ENCODE measurements at regions of chr14 and their contacts with region 1.

Region 1: GRCh38 chr14:68816262-68816942 is 23.5 kb upstream of the ZFP36L1 start:
- DNase-seq: peak; percentile 83 to 92 (median 86)
- H3K4me3 ChIP-seq: peak overlapping the region; percentile 79
- H3K4me3 Mint-ChIP-seq: peak overlapping the region; percentile 76 to 94 (median 82)
- H3K27ac ChIP-seq: peak overlapping the region; percentile 86
- H3K27ac Mint-ChIP-seq: peak overlapping the region; percentile 90 to 100 (median 96)
- H3K4me1 ChIP-seq: peaks cover 73% of the 10 kb centered on the region
- H3K4me1 Mint-ChIP-seq: peaks cover 68 to 76% (median 73%) of the 10 kb centered on the region in 3 donors
- H3K27me3 ChIP-seq: no peaks in the 10 kb centered on the region
- H3K27me3 Mint-ChIP-seq: no peaks in the 10 kb centered on the region

Region 2: DNA sequence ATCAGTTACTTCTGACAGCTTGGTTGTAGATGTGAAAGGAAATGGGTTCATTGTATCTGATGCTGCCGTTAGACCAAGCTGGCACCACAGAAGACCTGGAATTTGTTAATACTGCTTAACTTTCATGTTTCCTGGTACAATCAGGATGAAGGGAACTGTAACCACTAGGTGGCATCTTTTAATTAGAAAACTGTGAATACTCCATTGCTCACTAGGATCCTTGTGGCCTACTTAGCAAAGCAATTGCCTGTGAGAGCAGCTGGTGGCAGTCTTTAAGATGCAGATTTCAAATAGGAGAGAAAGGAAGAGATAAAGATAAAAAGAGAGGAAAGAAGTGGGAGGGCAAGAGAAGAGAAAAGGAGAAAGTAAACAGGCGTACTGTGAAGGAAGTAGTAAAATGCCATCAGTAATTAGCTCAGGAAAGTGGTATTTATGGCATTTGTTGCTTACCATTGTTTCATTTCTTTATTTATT is 882.4 kb before region 1 on chr14:
- CTCF ChIA-PET with region 1: interaction called, 17 read pairs
- POLR2A ChIA-PET with region 1: no interaction called
- DNase-seq: peak in 2 of 5 donors; percentile 29 to 33
- H3K4me3 ChIP-seq: no peak overlapping the region
- H3K4me3 Mint-ChIP-seq: no peak overlapping the region
- H3K27ac ChIP-seq: no peak overlapping the region
- H3K27ac Mint-ChIP-seq: peak overlapping the region in 1 of 8 donors; percentile 18
- H3K4me1 ChIP-seq: peaks cover 6% of the 10 kb centered on the region
- H3K4me1 Mint-ChIP-seq: peaks cover 4 to 5% (median 5%) of the 10 kb centered on the region in 3 donors
- H3K27me3 ChIP-seq: no peaks in the 10 kb centered on the region
- H3K27me3 Mint-ChIP-seq: peaks cover 0 to 1% of the 10 kb centered on the region in 2 donors

Region 3: DNA sequence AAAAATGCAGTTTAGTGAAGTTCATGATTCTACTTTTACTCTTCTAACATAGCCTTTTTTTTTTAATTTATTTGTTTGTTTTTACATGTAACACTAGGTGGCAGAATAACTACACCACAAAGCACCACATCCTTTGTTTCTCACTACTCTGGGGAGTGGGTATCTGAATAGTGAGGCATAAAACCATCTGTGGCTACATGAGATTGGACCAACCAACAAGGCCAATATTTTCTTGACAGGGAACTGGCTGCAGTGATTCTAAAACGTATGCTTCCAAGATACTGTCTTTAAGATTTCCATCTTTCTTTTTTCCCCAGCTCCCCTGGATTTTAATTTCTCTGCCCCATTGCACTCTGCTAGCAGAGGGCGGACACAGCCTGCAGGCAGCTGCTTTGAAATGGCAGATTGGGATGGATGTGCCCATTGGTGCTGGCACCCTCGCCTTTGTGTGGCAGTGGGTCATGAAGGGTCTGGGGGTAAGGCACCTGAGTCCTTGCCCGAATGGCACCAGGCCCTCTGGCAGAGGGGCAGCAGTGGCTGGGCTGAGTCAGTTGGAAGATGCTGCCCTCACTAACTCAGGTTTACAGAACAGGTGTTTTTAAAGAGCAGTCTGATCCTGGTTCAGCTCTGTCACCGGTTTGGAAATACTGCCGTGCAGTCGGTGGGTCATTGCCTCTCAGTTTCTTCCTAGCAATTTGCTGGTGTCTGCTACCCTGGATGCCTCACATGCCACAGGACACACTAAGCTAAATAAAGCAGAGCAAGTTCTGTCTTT is 567.7 kb before region 1 on chr14:
- CTCF ChIA-PET with region 1: interaction called, 111 read pairs
- POLR2A ChIA-PET with region 1: interaction called, 25 read pairs
- DNase-seq: peak in 2 of 5 donors; percentile 39 to 57
- H3K4me3 ChIP-seq: no peak overlapping the region
- H3K4me3 Mint-ChIP-seq: no peak overlapping the region
- H3K27ac ChIP-seq: no peak overlapping the region
- H3K27ac Mint-ChIP-seq: peak overlapping the region in 3 of 8 donors; percentile 15 to 60 (median 52)
- H3K4me1 ChIP-seq: peaks cover 12% of the 10 kb centered on the region
- H3K4me1 Mint-ChIP-seq: peaks cover 8 to 17% (median 14%) of the 10 kb centered on the region in 3 donors
- H3K27me3 ChIP-seq: no peaks in the 10 kb centered on the region
- H3K27me3 Mint-ChIP-seq: no peaks in the 10 kb centered on the region

Region 4: GRCh38 chr14:68685419-68686204 is 130.8 kb before region 1 on chr14:
- CTCF ChIA-PET with region 1: interaction called, 11 read pairs
- POLR2A ChIA-PET with region 1: interaction called, 4 read pairs
- DNase-seq: peak; percentile 66 to 94 (median 82)
- H3K4me3 ChIP-seq: no peak overlapping the region
- H3K4me3 Mint-ChIP-seq: peak overlapping the region; percentile 22 to 74 (median 50)
- H3K27ac ChIP-seq: peak overlapping the region; percentile 49
- H3K27ac Mint-ChIP-seq: peak overlapping the region; percentile 88 to 99 (median 98)
- H3K4me1 ChIP-seq: peaks cover 54% of the 10 kb centered on the region
- H3K4me1 Mint-ChIP-seq: peaks cover 58 to 68% (median 60%) of the 10 kb centered on the region in 3 donors
- H3K27me3 ChIP-seq: no peaks in the 10 kb centered on the region
- H3K27me3 Mint-ChIP-seq: no peaks in the 10 kb centered on the region

Region 5: GRCh38 chr14:68795597-68796417 is 20.6 kb before region 1 on chr14:
- CTCF ChIA-PET with region 1: interaction called, 282 read pairs
- POLR2A ChIA-PET with region 1: interaction called, 445 read pairs
- DNase-seq: peak; percentile 66 to 90 (median 86)
- H3K4me3 ChIP-seq: peak overlapping the region; percentile 99
- H3K4me3 Mint-ChIP-seq: peak overlapping the region; percentile 91 to 98 (median 97)
- H3K27ac ChIP-seq: peak overlapping the region; percentile 99
- H3K27ac Mint-ChIP-seq: peak overlapping the region; percentile 98 to 100 (median 100)
- H3K4me1 ChIP-seq: peaks cover 16% of the 10 kb centered on the region
- H3K4me1 Mint-ChIP-seq: peaks cover 25 to 43% (median 39%) of the 10 kb centered on the region in 3 donors
- H3K27me3 ChIP-seq: no peaks in the 10 kb centered on the region
- H3K27me3 Mint-ChIP-seq: peaks cover 0 to 18% of the 10 kb centered on the region in 2 donors

Region 6: GRCh38 chr14:68926236-68926635 is 109.8 kb after region 1 on chr14:
- CTCF ChIA-PET with region 1: no interaction called
- POLR2A ChIA-PET with region 1: no interaction called
- DNase-seq: no peak
- H3K4me3 ChIP-seq: no peak overlapping the region
- H3K4me3 Mint-ChIP-seq: no peak overlapping the region
- H3K27ac ChIP-seq: no peak overlapping the region
- H3K27ac Mint-ChIP-seq: peak overlapping the region in 1 of 8 donors; percentile 4
- H3K4me1 ChIP-seq: peaks cover 48% of the 10 kb centered on the region
- H3K4me1 Mint-ChIP-seq: peaks cover 0 to 8% (median 6%) of the 10 kb centered on the region in 3 donors
- H3K27me3 ChIP-seq: no peaks in the 10 kb centered on the region
- H3K27me3 Mint-ChIP-seq: peaks cover 1 to 17% of the 10 kb centered on the region in 2 donors

Measured in CD8-positive, alpha-beta memory T cell (primary cell).